ENCODE measurements at regions of chr2 and their contacts with region 1.

Region 1: DNA sequence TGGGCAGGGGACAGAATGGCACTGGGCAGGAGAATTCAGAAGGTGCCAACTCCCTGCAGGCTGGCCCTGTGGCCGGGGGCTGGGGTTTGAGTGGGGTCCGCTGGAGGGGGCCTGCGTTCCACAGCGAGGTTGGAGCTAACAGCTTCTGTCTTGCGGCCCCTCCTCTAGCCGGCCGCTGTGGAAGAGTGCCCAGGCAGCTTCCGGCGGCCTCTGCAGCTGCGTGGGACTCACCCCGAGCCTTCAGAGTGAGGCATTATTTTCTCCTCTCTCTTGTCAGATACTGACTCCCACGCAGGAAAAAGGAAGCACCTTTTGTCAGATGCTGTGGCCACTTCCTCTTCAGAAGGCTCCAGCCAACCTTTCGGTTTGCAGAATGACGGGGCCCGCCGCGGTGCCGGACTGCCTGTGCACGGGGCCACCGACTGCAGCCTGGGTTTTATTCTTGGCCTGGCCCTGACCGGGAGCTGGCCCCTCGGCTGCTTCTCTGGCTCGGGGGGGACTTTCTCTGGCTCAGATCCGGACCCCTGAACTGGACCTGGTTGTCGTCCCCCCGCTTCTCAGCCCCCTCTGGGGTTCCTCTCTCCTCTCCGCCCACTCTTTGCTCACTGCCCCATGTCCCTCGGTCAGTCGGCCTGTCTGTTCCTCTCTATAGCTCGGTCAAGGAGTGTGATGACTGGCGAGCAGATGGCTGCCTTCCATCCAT is 40.1 kb downstream of the ARHGAP25 start:
- DNase-seq: peak; percentile 85
- ATAC-seq: peak; percentile 89
- H3K4me3 ChIP-seq: peak overlapping the region; percentile 46
- H3K27ac ChIP-seq: peak overlapping the region; percentile 79
- H3K4me1 ChIP-seq: peaks cover 43% of the 10 kb centered on the region
- H3K27me3 ChIP-seq: no peaks in the 10 kb centered on the region
- CTCF ChIP-seq: no peak

Region 2: DNA sequence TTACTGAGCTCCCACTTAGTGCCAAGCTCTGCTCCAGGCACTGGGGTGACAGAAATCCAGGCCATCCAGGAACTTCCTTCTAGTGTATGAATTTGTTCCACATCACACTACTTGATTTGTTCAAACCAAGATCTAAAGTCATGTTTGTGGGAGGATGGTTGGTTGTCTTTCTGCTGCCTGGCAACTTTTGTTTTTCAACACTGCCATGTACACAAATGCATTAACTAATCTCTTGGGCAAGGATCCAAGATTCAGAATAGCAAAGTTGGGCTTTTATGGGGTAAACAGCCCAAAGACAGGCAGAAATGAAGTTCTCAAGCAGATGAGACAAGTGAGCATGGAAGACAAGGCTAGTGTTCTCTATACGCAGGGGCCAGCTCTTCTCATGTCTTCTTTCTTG is 184.8 kb before region 1 on chr2:
- intact Hi-C with region 1: no loop called
- DNase-seq: no peak
- ATAC-seq: no peak
- H3K4me3 ChIP-seq: no peak overlapping the region
- H3K27ac ChIP-seq: no peak overlapping the region
- H3K4me1 ChIP-seq: peaks cover 5% of the 10 kb centered on the region
- H3K27me3 ChIP-seq: no peaks in the 10 kb centered on the region
- CTCF ChIP-seq: no peak

Region 3: GRCh38 chr2:68653538-68653982 is 121.2 kb before region 1 on chr2:
- intact Hi-C with region 1: no loop called
- DNase-seq: no peak
- ATAC-seq: peak; percentile 53
- H3K4me3 ChIP-seq: no peak overlapping the region
- H3K27ac ChIP-seq: no peak overlapping the region
- H3K4me1 ChIP-seq: peaks cover 9% of the 10 kb centered on the region
- H3K27me3 ChIP-seq: peaks cover 6% of the 10 kb centered on the region
- CTCF ChIP-seq: no peak

Region 4: DNA sequence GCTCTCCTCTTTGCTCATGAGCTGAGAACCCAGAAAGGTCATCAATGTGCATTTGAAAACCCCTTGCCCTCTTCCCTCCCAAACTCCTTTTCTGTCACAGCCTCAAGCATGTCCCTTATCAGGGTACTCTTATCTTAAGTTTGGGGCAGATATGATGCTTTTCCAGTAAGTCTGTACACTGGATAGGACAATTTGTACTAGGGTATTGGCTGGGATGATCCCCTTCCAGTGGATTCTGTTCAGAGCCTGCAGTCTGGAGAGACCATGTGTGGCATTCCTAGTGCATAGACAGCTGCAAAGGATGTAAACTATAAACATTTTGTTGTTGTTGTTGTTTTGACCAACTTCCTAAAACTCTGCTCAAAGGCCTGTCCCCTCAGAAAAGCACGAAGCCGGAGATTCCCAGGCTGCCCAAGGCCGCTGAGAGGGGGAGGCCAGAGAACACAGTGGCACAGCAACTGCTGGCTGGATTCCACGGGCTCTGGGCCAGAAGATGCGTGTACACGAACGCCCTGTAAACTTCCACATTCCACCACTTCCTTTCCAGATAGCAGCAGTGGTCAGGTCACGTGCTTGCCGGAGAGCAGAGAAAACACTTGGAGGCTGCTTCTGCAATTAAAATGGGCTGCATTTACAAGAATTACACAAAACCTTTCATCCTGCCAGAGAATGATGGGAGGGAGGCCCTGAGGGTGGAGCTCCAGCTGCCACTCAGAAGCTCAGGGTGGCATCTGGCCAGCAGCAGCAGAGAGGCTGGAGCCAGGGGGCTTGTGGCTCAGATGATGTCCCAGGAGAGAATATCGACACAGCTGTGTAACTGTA is 54.4 kb after region 1 on chr2:
- intact Hi-C with region 1: loop called (anchors 10 kb)
- DNase-seq: peak; percentile 97
- ATAC-seq: peak; percentile 90
- H3K4me3 ChIP-seq: no peak overlapping the region
- H3K27ac ChIP-seq: peak overlapping the region; percentile 73
- H3K4me1 ChIP-seq: peaks cover 52% of the 10 kb centered on the region
- H3K27me3 ChIP-seq: no peaks in the 10 kb centered on the region
- CTCF ChIP-seq: peak; percentile 19

Region 5: GRCh38 chr2:68839260-68839833 is 64.6 kb after region 1 on chr2:
- intact Hi-C with region 1: no loop called
- DNase-seq: no peak
- ATAC-seq: peak; percentile 66
- H3K4me3 ChIP-seq: no peak overlapping the region
- H3K27ac ChIP-seq: no peak overlapping the region
- H3K4me1 ChIP-seq: no peaks in the 10 kb centered on the region
- H3K27me3 ChIP-seq: no peaks in the 10 kb centered on the region
- CTCF ChIP-seq: peak; percentile 65

Region 6: GRCh38 chr2:68936427-68936826 is 161.7 kb after region 1 on chr2:
- intact Hi-C with region 1: no loop called
- DNase-seq: no peak
- ATAC-seq: no peak
- H3K4me3 ChIP-seq: no peak overlapping the region
- H3K27ac ChIP-seq: no peak overlapping the region
- H3K4me1 ChIP-seq: peaks cover 11% of the 10 kb centered on the region
- H3K27me3 ChIP-seq: no peaks in the 10 kb centered on the region
- CTCF ChIP-seq: no peak

Measured in upper lobe of right lung (tissue), 1 donor.